ENCODE measurements at regions of chr13 and their contacts with region 1.

Region 1: GRCh38 chr13:46492946-46493345 is 60.0 kb upstream of the LRCH1 start:
- DNase-seq: no peak

Region 2: DNA sequence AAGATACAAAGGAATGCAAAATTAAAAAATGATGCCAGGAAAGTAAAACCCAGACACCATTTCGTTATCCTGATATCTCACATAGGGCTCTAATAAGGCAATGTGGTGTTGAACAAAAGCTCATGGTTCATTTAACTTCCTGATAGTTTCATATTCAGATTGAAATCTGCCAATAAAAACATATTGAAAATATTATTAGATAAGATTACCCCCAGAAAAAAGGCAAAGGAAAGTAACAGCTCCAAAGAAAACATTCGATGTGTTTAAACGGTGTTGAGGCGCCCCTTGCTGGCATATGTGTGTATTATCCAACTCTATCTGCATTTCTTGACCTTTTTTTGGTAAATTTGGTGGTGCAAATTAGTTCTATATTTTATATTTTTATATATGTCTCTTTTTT is 228.1 kb after region 1 on chr13:
- intact Hi-C with region 1: loop called (anchors 2 kb)
- DNase-seq: no peak